Left ventricle myocardium inferior (tissue), 1 donor: ENCODE measurements at regions of chr9 and their contacts with region 1.

Region 1: GRCh38 chr9:116661037-116661954 is 25.8 kb upstream of the TRIM32 start:
- DNase-seq: no peak
- H3K4me3 ChIP-seq: no peak overlapping the region
- H3K27ac ChIP-seq: no peak overlapping the region
- H3K4me1 ChIP-seq: peaks cover 9% of the 10 kb centered on the region
- H3K27me3 ChIP-seq: no peaks in the 10 kb centered on the region
- CTCF ChIP-seq: peak; percentile 80

Region 2: GRCh38 chr9:115591584-115591984 is 1069.7 kb before region 1 on chr9:
- intact Hi-C with region 1: loop called (anchors 5 kb)
- DNase-seq: peak; percentile 18
- H3K4me3 ChIP-seq: no peak overlapping the region
- H3K27ac ChIP-seq: no peak overlapping the region
- H3K4me1 ChIP-seq: no peaks in the 10 kb centered on the region
- H3K27me3 ChIP-seq: peaks cover 28% of the 10 kb centered on the region
- CTCF ChIP-seq: peak; percentile 62

Region 3: DNA sequence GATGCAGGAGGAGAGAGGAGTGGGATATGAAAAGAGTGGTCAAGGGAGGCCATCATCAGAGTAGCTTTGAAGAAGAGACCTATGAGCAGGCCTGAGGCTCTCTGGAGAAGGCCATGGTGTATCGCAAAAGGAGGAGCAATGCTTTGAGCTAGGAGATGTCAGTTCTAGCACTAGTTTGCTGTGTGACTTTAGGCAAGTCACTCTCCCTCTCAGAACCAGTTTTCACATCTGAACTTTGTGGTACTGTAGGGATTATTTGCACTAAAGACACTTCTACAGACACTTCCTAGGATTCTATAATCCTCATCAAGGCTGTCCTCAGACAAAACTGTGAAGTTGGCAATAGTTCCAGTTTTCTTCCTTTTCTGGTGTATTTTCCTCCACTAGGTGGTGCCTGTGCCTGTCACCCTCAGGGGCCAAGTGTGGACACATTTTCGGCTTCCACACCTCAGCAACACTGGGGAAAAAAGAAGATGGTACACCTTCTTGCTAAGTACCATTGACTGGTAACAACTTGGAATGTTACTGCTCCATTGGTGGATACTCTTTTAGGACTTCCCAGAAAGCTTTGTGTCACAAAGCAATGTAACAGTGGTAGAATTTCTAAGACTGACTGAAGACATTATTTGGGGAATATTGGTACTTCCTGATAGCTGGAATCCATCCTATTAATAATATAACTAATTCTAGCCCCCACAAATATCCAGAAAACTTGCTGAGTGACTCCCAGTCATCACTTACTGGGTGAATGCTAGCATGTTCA is 497.8 kb before region 1 on chr9:
- intact Hi-C with region 1: loop called (anchors 10 kb)
- DNase-seq: no peak
- H3K4me3 ChIP-seq: no peak overlapping the region
- H3K27ac ChIP-seq: no peak overlapping the region
- H3K4me1 ChIP-seq: peaks cover 4% of the 10 kb centered on the region
- H3K27me3 ChIP-seq: no peaks in the 10 kb centered on the region
- CTCF ChIP-seq: peak; percentile 60

Region 4: GRCh38 chr9:116437411-116438370 is 223.6 kb before region 1 on chr9:
- intact Hi-C with region 1: no loop called
- DNase-seq: no peak
- H3K4me3 ChIP-seq: no peak overlapping the region
- H3K27ac ChIP-seq: no peak overlapping the region
- H3K4me1 ChIP-seq: peaks cover 7% of the 10 kb centered on the region
- H3K27me3 ChIP-seq: no peaks in the 10 kb centered on the region
- CTCF ChIP-seq: no peak